Activated naive CD4-positive, alpha-beta T cell treated with anti-CD3 and anti-CD28 coated beads for 36 hours (primary cell): ENCODE measurements at regions of chr7 and their contacts with region 1.

Region 1: DNA sequence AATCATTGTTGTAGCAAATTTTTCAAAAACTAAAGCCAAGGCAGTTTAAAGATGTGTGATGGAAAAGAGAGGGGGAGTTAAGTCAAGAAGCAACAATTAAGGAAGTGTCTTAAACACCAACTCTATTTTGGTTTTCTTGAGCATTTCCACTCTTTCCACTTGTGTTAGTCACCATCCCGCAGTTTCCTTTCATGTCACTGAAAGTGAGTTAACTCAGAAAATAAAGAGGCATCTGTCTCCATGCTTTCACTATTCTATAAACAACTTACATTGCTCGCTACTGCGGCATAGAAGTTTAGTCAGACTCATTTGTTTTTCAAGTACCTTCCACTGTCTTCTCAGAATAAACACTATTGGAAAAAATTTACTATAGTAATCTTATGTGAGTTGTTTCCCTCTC is 284.9 kb upstream of the SEMA3D start:
- DNase-seq: no peak
- H3K4me3 Mint-ChIP-seq: no peak overlapping the region
- H3K27ac Mint-ChIP-seq: no peak overlapping the region
- H3K4me1 Mint-ChIP-seq: no peaks in the 10 kb centered on the region
- H3K27me3 Mint-ChIP-seq: no peaks in the 10 kb centered on the region

Region 2: DNA sequence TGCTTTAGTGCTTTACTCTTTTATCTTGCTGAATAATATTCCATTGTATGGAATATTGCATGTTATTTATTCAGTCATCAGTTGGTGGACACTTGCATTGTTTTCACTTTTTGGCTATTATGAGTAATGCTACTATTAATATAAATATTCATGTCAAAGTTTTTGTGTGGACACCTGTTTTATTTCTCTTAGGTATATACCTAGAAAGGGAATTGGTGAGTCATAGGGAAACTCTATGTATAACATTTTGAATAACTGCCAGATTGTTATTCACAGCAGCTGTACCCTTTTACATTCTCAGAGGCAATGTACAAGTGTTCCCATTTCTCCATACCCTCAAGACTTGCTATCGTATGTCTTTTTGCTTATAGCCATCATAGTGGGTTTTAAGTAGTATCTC is 1545.9 kb before region 1 on chr7:
- CTCF ChIA-PET with region 1: no interaction called
- intact Hi-C with region 1: loop called (anchors 5 kb)
- DNase-seq: no peak
- H3K4me3 Mint-ChIP-seq: no peak overlapping the region
- H3K27ac Mint-ChIP-seq: no peak overlapping the region
- H3K4me1 Mint-ChIP-seq: no peaks in the 10 kb centered on the region
- H3K27me3 Mint-ChIP-seq: peaks cover 4% of the 10 kb centered on the region

Region 3: GRCh38 chr7:85023045-85023712 is 448.6 kb before region 1 on chr7:
- CTCF ChIA-PET with region 1: no interaction called
- intact Hi-C with region 1: no loop called
- DNase-seq: peak; percentile 29
- H3K4me3 Mint-ChIP-seq: no peak overlapping the region
- H3K27ac Mint-ChIP-seq: no peak overlapping the region
- H3K4me1 Mint-ChIP-seq: no peaks in the 10 kb centered on the region
- H3K27me3 Mint-ChIP-seq: peaks cover 3% of the 10 kb centered on the region